MCF 10A (cell line): ENCODE measurements at regions of chr14 and their contacts with region 1.

Region 1: GRCh38 chr14:42224053-42224888 is 617.6 kb downstream of the LRFN5 start:
- DNase-seq: peak; percentile 85
- H3K4me3 Mint-ChIP-seq: no peak overlapping the region
- H3K27ac Mint-ChIP-seq: no peak overlapping the region
- H3K4me1 Mint-ChIP-seq: peaks cover 10% of the 10 kb centered on the region
- H3K27me3 Mint-ChIP-seq: no peaks in the 10 kb centered on the region
- CTCF ChIP-seq: peak; percentile 81

Region 2: DNA sequence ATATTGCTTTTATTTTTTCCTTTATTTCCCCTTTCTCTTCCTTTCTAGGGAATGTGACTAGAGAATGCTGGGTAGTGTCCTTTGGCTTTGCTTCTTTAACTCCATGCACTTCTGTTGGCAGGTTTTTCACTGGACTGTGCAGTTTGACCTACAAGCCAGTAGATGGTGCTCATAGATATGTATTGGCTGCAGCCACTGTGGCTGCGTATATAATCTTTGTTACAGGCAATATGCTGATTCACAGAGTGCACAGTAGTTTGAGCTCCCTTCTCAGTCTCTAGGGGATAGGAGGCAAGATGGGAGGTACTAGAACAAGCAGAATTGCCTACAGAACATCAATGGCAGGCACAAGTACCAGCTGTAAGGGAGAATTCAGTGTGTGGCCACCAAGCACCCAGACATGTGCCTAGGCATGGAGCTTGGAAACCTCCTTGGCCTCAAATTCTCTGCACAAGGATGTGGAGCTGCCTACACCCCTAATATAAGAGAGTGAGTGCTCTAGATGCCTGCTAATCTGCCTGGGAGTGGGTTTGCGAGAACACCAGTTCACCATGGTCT is 114.0 kb before region 1 on chr14:
- CTCF ChIA-PET with region 1: interaction called, 5 read pairs
- POLR2A ChIA-PET with region 1: no interaction called
- intact Hi-C with region 1: loop called (anchors 2 kb)
- DNase-seq: peak; percentile 56
- H3K4me3 Mint-ChIP-seq: no peak overlapping the region
- H3K27ac Mint-ChIP-seq: no peak overlapping the region
- H3K4me1 Mint-ChIP-seq: peaks cover 5% of the 10 kb centered on the region
- H3K27me3 Mint-ChIP-seq: no peaks in the 10 kb centered on the region
- CTCF ChIP-seq: peak; percentile 52

Region 3: GRCh38 chr14:42163136-42163535 is 61.1 kb before region 1 on chr14:
- CTCF ChIA-PET with region 1: no interaction called
- POLR2A ChIA-PET with region 1: no interaction called
- intact Hi-C with region 1: no loop called
- DNase-seq: no peak
- H3K4me3 Mint-ChIP-seq: no peak overlapping the region
- H3K27ac Mint-ChIP-seq: peak overlapping the region; percentile 1
- H3K4me1 Mint-ChIP-seq: no peaks in the 10 kb centered on the region
- H3K27me3 Mint-ChIP-seq: no peaks in the 10 kb centered on the region
- CTCF ChIP-seq: no peak

Region 4: GRCh38 chr14:42911396-42912041 is 687.2 kb after region 1 on chr14:
- CTCF ChIA-PET with region 1: interaction called, 4 read pairs
- POLR2A ChIA-PET with region 1: no interaction called
- intact Hi-C with region 1: loop called (anchors 10 kb)
- DNase-seq: peak; percentile 17
- H3K4me3 Mint-ChIP-seq: no peak overlapping the region
- H3K27ac Mint-ChIP-seq: no peak overlapping the region
- H3K4me1 Mint-ChIP-seq: no peaks in the 10 kb centered on the region
- H3K27me3 Mint-ChIP-seq: no peaks in the 10 kb centered on the region
- CTCF ChIP-seq: peak; percentile 13

Region 5: DNA sequence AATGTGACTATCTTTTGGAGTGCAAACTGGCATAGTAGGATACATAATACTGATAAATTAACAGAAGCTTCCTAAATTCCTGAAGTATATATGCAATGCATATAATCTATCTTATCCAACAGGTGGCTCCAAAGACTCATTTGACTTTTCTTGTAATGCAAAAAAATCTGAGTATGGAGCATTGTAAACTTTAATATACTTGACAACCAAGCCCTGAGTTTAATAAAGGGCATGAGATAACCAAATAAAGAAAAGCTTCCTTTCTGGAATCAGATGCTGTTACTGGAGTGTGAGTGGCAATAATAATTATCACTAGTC is 1279.3 kb after region 1 on chr14:
- CTCF ChIA-PET with region 1: interaction called, 3 read pairs
- POLR2A ChIA-PET with region 1: no interaction called
- intact Hi-C with region 1: loop called (anchors 10 kb)
- DNase-seq: peak; percentile 21
- H3K4me3 Mint-ChIP-seq: no peak overlapping the region
- H3K27ac Mint-ChIP-seq: no peak overlapping the region
- H3K4me1 Mint-ChIP-seq: peaks cover 2% of the 10 kb centered on the region
- H3K27me3 Mint-ChIP-seq: no peaks in the 10 kb centered on the region
- CTCF ChIP-seq: peak; percentile 48

Region 6: DNA sequence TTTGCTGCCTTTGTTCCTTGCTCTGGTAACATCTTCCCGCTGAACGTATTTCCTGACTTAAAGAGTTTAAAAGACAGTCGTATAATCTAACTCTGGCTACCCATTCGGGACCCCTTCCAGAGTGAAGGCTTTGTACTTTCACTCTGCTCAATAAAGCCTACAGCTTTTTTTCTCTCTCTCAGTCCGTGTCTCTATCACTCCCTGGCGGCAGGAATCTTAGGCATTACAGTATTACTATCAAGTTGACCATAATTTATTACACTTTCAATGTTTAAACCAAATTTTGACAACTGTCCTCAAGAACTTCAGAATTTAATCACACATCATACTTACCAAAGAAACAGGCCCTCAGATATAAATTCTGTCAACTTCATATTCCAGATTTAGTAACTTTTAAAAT is 1314.9 kb after region 1 on chr14:
- CTCF ChIA-PET with region 1: no interaction called
- POLR2A ChIA-PET with region 1: no interaction called
- intact Hi-C with region 1: loop called (anchors 2 kb)
- DNase-seq: peak; percentile 57
- H3K4me3 Mint-ChIP-seq: peak overlapping the region; percentile 21
- H3K27ac Mint-ChIP-seq: no peak overlapping the region
- H3K4me1 Mint-ChIP-seq: peaks cover 10% of the 10 kb centered on the region
- H3K27me3 Mint-ChIP-seq: no peaks in the 10 kb centered on the region
- CTCF ChIP-seq: peak; percentile 46